ENCODE measurements at regions of chr11 and their contacts with region 1.

Region 1: GRCh38 chr11:64304316-64305072 is 830 bp upstream of the ESRRA start:
- DNase-seq: peak; percentile 93 to 96
- ATAC-seq: peak; percentile 33 to 47 (median 34)
- H3K4me3 ChIP-seq: peak overlapping the region; percentile 68
- H3K4me3 Mint-ChIP-seq: peak overlapping the region; percentile 93
- H3K27ac ChIP-seq: peak overlapping the region; percentile 88
- H3K27ac Mint-ChIP-seq: peak overlapping the region; percentile 91 to 97
- H3K4me1 ChIP-seq: peaks cover 54% of the 10 kb centered on the region
- H3K4me1 Mint-ChIP-seq: peaks cover 21 to 37% of the 10 kb centered on the region in 2 donors
- H3K27me3 ChIP-seq: peaks cover 19% of the 10 kb centered on the region
- H3K27me3 Mint-ChIP-seq: peaks cover 6 to 17% of the 10 kb centered on the region in 2 donors
- CTCF ChIP-seq: peak; percentile 83

Region 2: GRCh38 chr11:64185816-64186498 is 118.5 kb before region 1 on chr11 and contains the start of gene STIP1:
- intact Hi-C with region 1: loop called (anchors 5 kb)
- DNase-seq: peak; percentile 96 to 100
- ATAC-seq: peak; percentile 85 to 95 (median 86)
- H3K4me3 ChIP-seq: peak within 1 kb of the TSS; percentile 60
- H3K4me3 Mint-ChIP-seq: peak within 1 kb of the TSS; percentile 98
- H3K27ac ChIP-seq: peak within 1 kb of the TSS; percentile 66
- H3K27ac Mint-ChIP-seq: no peak within 1 kb of the TSS
- H3K4me1 ChIP-seq: peaks cover 20% of the 10 kb centered on the region
- H3K4me1 Mint-ChIP-seq: peaks cover 6 to 31% of the 10 kb centered on the region in 2 donors
- H3K27me3 ChIP-seq: no peaks in the 10 kb centered on the region
- H3K27me3 Mint-ChIP-seq: no peaks in the 10 kb centered on the region
- CTCF ChIP-seq: no peak
- total RNA-seq, gene STIP1: 80.9 to 110 (median 85.1) TPM

Region 3: GRCh38 chr11:64240394-64241174 is 63.9 kb before region 1 on chr11 and contains the start of gene FKBP2:
- intact Hi-C with region 1: loop called (anchors 1 kb)
- DNase-seq: peak; percentile 98 to 99
- ATAC-seq: peak; percentile 65 to 84 (median 73)
- H3K4me3 ChIP-seq: peak within 1 kb of the TSS; percentile 79
- H3K4me3 Mint-ChIP-seq: peak within 1 kb of the TSS; percentile 96
- H3K27ac ChIP-seq: peak within 1 kb of the TSS; percentile 98
- H3K27ac Mint-ChIP-seq: peak within 1 kb of the TSS; percentile 98 to 99
- H3K4me1 ChIP-seq: peaks cover 66% of the 10 kb centered on the region
- H3K4me1 Mint-ChIP-seq: peaks cover 8 to 44% of the 10 kb centered on the region in 2 donors
- H3K27me3 ChIP-seq: no peaks in the 10 kb centered on the region
- H3K27me3 Mint-ChIP-seq: no peaks in the 10 kb centered on the region
- CTCF ChIP-seq: no peak
- total RNA-seq, gene FKBP2: 26.4 to 39.3 (median 30.3) TPM

Region 4: GRCh38 chr11:64269380-64270234 is 34.9 kb before region 1 on chr11:
- intact Hi-C with region 1: loop called (anchors 2 kb)
- DNase-seq: peak; percentile 94 to 99
- ATAC-seq: peak; percentile 68 to 83 (median 72)
- H3K4me3 ChIP-seq: peak overlapping the region; percentile 53
- H3K4me3 Mint-ChIP-seq: peak overlapping the region; percentile 97
- H3K27ac ChIP-seq: peak overlapping the region; percentile 92
- H3K27ac Mint-ChIP-seq: peak overlapping the region; percentile 94 to 100
- H3K4me1 ChIP-seq: peaks cover 42% of the 10 kb centered on the region
- H3K4me1 Mint-ChIP-seq: peaks cover 36 to 40% of the 10 kb centered on the region in 2 donors
- H3K27me3 ChIP-seq: no peaks in the 10 kb centered on the region
- H3K27me3 Mint-ChIP-seq: no peaks in the 10 kb centered on the region
- CTCF ChIP-seq: peak; percentile 34

Region 5: DNA sequence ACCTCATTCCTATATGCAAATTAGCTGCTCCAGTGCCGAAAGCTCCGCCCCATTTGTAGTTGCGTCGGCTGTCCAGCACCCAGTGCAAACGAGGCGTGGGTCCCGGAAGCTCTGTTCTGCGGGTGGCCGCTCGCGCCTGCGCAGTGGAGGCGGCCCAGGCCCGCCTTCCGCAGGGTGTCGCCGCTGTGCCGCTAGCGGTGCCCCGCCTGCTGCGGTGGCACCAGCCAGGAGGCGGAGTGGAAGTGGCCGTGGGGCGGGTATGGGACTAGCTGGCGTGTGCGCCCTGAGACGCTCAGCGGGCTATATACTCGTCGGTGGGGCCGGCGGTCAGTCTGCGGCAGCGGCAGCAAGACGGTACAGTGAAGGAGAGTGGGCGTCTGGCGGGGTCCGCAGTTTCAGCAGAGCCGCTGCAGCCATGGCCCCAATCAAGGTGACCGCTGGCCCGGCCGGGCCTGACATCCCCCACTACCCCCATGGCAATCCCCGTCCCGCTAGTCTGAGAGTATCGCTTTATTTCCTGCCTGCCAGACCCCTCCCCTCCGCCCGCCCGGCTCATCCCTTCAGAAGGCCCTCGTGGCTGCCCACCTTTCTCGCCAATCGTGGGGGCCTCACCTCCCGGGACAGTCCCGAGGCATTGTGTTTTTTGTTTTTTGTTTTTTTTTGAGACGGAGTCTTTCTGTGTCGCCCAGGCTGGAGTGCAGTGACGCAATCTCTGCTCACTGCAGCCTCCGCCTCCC is 13.6 kb after region 1 on chr11 and contains the start of gene PRDX5:
- intact Hi-C with region 1: loop called (anchors 1 kb)
- DNase-seq: peak; percentile 95 to 99
- ATAC-seq: peak; percentile 74 to 90 (median 78)
- H3K4me3 ChIP-seq: peak within 1 kb of the TSS; percentile 91
- H3K4me3 Mint-ChIP-seq: peak within 1 kb of the TSS; percentile 97
- H3K27ac ChIP-seq: peak within 1 kb of the TSS; percentile 86
- H3K27ac Mint-ChIP-seq: peak within 1 kb of the TSS; percentile 88 to 99
- H3K4me1 ChIP-seq: peaks cover 30% of the 10 kb centered on the region
- H3K4me1 Mint-ChIP-seq: peaks cover 47 to 54% of the 10 kb centered on the region in 2 donors
- H3K27me3 ChIP-seq: no peaks in the 10 kb centered on the region
- H3K27me3 Mint-ChIP-seq: no peaks in the 10 kb centered on the region
- CTCF ChIP-seq: no peak
- total RNA-seq, gene PRDX5: 85.9 to 104 (median 88.8) TPM

Region 6: GRCh38 chr11:64358907-64359711 is 54.6 kb after region 1 on chr11 and contains the start of gene RPS6KA4:
- intact Hi-C with region 1: loop called (anchors 2 kb)
- DNase-seq: peak; percentile 64 to 75
- ATAC-seq: peak; percentile 90 to 92 (median 91)
- H3K4me3 ChIP-seq: peak within 1 kb of the TSS; percentile 89
- H3K4me3 Mint-ChIP-seq: peak within 1 kb of the TSS; percentile 93
- H3K27ac ChIP-seq: peak within 1 kb of the TSS; percentile 62
- H3K27ac Mint-ChIP-seq: peak within 1 kb of the TSS; percentile 54 to 86
- H3K4me1 ChIP-seq: peaks cover 43% of the 10 kb centered on the region
- H3K4me1 Mint-ChIP-seq: peaks cover 9 to 30% of the 10 kb centered on the region in 2 donors
- H3K27me3 ChIP-seq: no peaks in the 10 kb centered on the region
- H3K27me3 Mint-ChIP-seq: no peaks in the 10 kb centered on the region
- CTCF ChIP-seq: no peak
- total RNA-seq, gene RPS6KA4: 27.6 to 36.0 (median 34.4) TPM